ENCODE measurements at regions of chr1 and their contacts with region 1.

Region 1: DNA sequence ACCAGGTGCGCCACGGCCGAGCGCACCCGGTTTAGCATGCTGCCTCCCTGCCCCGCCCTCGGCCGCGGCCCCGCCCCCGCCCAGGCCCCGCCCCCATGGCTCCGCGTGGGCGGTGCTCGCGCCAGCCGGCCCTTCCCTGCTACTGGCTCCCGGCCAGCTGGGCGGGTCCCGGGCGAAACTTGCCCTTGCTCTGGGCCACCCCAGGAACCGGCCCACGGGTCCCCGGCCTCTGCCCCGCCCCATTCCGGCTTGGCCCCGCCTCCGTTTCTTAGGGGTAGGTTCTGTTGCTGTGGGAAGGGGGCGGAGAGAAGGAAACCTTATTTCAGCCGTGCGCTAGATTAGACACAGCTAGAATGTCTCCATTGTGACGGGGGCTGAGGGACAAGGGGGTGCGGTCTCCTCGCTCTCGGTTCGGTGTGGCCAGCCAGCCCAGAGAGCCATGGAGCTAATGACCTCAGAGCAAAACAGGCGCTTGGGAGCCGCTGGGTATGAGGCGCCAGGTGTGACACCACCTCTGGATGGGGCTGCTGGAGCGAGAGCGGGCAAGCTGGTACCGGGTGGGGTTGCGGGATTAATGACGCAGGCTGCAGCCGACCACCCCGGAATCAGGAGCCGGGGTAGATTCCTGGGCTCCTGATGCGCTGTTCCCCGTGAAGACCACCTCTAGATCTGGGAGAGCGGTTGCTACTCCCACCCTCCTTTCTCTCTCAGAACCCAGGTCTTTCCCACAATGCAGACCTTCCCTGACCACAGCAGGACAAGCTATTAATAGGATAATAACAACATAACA is at the start of gene PPM1J:
- H3K4me3 Mint-ChIP-seq: peak within 1 kb of the TSS; percentile 83
- H3K27ac Mint-ChIP-seq: peak within 1 kb of the TSS; percentile 77
- H3K4me1 Mint-ChIP-seq: peaks cover 79% of the 10 kb centered on the region
- H3K27me3 Mint-ChIP-seq: peaks cover 49% of the 10 kb centered on the region

Region 2: GRCh38 chr1:111904478-111905218 is 810.8 kb before region 1 on chr1:
- intact Hi-C with region 1: no loop called
- H3K4me3 Mint-ChIP-seq: no peak overlapping the region
- H3K27ac Mint-ChIP-seq: no peak overlapping the region
- H3K4me1 Mint-ChIP-seq: no peaks in the 10 kb centered on the region
- H3K27me3 Mint-ChIP-seq: peaks cover 6% of the 10 kb centered on the region

Region 3: GRCh38 chr1:112395821-112396652 is 319.4 kb before region 1 on chr1 and contains the start of gene CTTNBP2NL:
- intact Hi-C with region 1: loop called (anchors 2 kb)
- H3K4me3 Mint-ChIP-seq: peak within 1 kb of the TSS; percentile 98
- H3K27ac Mint-ChIP-seq: peak within 1 kb of the TSS; percentile 98
- H3K4me1 Mint-ChIP-seq: peaks cover 76% of the 10 kb centered on the region
- H3K27me3 Mint-ChIP-seq: no peaks in the 10 kb centered on the region

Region 4: GRCh38 chr1:112674439-112674985 is 40.9 kb before region 1 on chr1 and contains the start of gene MOV10:
- intact Hi-C with region 1: no loop called
- H3K4me3 Mint-ChIP-seq: peak within 1 kb of the TSS; percentile 100
- H3K27ac Mint-ChIP-seq: peak within 1 kb of the TSS; percentile 100
- H3K4me1 Mint-ChIP-seq: peaks cover 34% of the 10 kb centered on the region
- H3K27me3 Mint-ChIP-seq: peaks cover 9% of the 10 kb centered on the region

Region 5: DNA sequence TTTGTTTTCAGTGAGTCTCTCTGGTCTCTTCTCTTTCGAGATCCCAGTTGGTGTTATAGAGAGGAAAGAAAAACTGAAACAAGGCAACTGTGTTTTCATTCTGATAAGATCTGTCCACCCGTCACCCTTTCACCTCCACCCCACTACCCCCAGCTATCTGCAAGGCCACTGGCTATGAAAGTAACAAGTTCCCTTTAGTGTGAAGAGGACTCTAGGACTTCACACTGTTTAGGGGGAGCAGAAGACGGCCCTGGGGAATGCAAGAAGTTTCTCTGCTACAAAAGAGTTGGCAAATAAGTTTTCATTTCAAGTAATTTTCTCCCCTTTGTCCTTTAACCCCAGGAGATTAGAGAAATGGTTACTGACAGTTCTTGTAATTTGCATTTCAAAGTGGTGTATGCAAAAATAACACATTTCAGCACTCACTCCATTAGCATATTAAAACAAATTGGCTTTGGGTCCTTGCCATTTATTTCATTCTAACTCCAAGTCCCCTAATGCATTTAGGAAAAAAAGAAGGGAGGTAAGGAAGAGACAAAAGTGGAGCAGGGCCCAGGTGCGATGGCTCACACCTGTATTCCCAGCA is 79.3 kb after region 1 on chr1:
- intact Hi-C with region 1: no loop called
- H3K4me3 Mint-ChIP-seq: no peak overlapping the region
- H3K27ac Mint-ChIP-seq: no peak overlapping the region
- H3K4me1 Mint-ChIP-seq: peaks cover 8% of the 10 kb centered on the region
- H3K27me3 Mint-ChIP-seq: peaks cover 8% of the 10 kb centered on the region

Region 6: DNA sequence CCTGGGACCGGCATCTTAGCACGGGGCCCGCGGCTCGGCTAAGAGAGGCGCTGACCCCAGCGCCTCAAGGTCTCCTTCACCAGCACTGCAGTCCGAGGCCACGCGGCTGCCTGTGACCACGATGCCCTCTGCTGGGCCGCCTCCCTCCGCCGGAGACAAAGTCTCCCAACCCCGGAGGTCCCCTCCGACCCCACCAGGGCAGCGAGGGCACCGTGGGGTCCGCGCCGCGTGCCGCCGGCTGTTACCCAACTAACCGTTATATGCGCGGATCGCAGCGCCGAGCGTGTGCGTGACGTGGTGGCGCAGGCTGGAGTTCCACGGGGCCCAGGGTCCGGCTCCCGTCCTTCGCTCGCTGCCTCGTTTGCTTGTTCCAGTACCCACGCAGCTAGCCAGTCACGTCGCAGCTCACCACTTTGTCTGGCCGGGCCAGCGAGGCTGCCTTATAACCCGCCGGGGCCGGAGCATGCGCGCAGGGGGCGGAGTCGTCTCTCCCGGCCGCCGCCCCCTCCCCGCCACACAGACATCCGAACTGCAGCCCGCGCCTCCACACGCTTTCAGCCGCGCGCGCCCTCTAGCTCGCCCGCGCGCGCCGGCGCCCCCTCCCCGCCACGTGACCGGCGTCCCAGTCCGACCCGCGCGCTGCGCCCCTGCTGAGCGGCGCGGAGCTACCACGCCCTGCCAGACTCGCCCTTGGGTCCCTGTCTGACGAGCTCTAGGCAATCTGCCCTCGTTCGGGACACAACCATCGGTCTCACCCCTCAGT is 240.5 kb after region 1 on chr1 and contains the start of gene SLC16A1:
- intact Hi-C with region 1: loop called (anchors 2 kb)
- H3K4me3 Mint-ChIP-seq: peak within 1 kb of the TSS; percentile 94
- H3K27ac Mint-ChIP-seq: peak within 1 kb of the TSS; percentile 98
- H3K4me1 Mint-ChIP-seq: peaks cover 56% of the 10 kb centered on the region
- H3K27me3 Mint-ChIP-seq: no peaks in the 10 kb centered on the region

Region 7: DNA sequence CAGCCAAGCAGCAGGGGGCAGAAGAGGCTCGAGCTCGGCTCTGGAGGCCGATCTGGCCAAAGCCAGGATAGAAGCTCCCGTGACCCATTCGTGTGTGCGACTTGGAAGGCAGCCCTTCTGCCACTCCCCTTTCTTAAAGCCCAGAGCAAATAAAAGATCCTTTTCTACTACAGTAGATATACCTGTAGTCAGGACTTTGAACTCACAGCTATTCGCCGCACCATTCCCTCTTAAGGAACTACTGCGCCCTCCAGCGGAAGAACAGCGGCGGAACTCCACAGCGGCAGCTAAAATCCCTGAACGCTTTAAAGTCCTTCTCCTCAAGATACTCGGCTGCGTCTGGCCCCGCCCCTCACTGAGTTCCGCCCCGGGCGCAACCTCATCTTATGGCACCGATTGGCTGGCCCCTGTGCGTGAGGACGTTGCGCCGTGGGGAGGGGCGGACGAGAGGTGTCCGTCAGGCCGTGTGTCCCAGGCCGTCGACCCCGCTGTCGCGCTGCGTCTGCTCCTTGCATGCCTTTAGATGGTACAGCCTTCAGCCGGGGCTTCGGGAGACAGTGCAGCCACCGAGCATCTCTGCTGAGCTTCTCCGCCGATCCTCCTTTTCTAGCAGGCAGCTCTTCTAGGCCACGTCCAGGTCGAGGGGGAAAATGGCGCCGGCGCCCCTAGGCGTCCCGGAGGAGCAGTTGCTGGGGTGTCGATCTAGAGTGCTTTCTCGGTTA is 357.5 kb after region 1 on chr1 and contains the start of gene LRIG2:
- intact Hi-C with region 1: loop called (anchors 2 kb)
- H3K4me3 Mint-ChIP-seq: peak within 1 kb of the TSS; percentile 92
- H3K27ac Mint-ChIP-seq: peak within 1 kb of the TSS; percentile 96
- H3K4me1 Mint-ChIP-seq: peaks cover 26% of the 10 kb centered on the region
- H3K27me3 Mint-ChIP-seq: no peaks in the 10 kb centered on the region

Region 8: DNA sequence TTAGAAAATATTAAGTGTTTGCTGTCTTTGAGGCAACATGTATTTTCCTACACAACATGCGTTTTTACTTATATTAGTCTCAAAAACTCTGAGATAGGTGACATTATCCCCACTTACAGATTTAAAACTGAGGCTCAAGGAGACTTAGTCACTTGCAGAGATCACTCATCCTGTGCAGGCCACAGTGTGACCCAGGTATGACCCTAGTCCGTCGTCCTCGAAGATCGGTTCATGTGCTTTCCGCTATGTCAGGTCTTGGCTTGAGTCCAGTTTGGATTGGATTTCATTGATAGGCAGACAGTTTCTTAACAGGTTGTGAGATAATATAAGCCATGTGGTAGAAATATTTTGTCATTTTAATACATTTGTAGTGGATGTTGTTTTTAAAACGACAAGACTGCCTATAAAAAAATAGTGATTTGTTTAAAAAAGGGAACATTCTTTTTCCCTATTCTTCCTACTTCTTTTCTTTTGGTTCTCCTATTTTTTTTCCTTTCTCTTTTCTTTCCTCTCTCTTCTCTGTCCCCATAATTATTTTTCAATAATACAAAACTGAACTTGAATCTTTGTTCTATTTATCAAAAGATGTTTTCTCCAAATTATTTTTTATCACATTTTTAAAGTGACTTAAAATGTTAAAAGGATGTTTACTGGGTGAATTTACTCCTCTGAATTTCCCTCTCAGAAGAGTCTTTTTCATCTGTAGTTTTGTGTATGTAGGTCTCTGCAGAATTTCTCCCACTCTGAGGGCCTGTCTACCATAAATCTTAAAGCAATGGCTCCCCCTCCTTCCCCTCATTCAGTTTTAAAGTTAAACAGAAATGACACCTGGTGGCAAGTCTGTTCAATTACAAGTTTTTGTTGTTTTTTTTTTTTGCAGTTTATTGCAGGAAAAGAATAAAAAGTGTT is 962.0 kb after region 1 on chr1:
- intact Hi-C with region 1: loop called (anchors 5 kb)
- H3K4me3 Mint-ChIP-seq: no peak overlapping the region
- H3K27ac Mint-ChIP-seq: no peak overlapping the region
- H3K4me1 Mint-ChIP-seq: peaks cover 23% of the 10 kb centered on the region
- H3K27me3 Mint-ChIP-seq: peaks cover 5% of the 10 kb centered on the region